Breast epithelium (tissue), 4 donors: ENCODE measurements at regions of chr9 and their contacts with region 1.

Region 1: GRCh38 chr9:24657387-24657786 is 111.7 kb upstream of the IZUMO3 start:
- DNase-seq: no peak
- H3K4me3 ChIP-seq: no peak overlapping the region
- H3K27ac ChIP-seq: no peak overlapping the region
- H3K4me1 ChIP-seq: no peaks in the 10 kb centered on the region
- H3K27me3 ChIP-seq: no peaks in the 10 kb centered on the region
- CTCF ChIP-seq: no peak
- POLR2A ChIP-seq: no peak

Region 2: GRCh38 chr9:24594234-24594850 is 63.0 kb before region 1 on chr9:
- intact Hi-C with region 1: no loop called
- DNase-seq: no peak
- H3K4me3 ChIP-seq: no peak overlapping the region
- H3K27ac ChIP-seq: no peak overlapping the region
- H3K4me1 ChIP-seq: no peaks in the 10 kb centered on the region
- H3K27me3 ChIP-seq: no peaks in the 10 kb centered on the region
- CTCF ChIP-seq: no peak
- POLR2A ChIP-seq: no peak

Region 3: GRCh38 chr9:24708814-24709213 is 51.4 kb after region 1 on chr9:
- intact Hi-C with region 1: loop called (anchors 2 kb)
- DNase-seq: no peak
- H3K4me3 ChIP-seq: no peak overlapping the region
- H3K27ac ChIP-seq: no peak overlapping the region
- H3K4me1 ChIP-seq: no peaks in the 10 kb centered on the region
- H3K27me3 ChIP-seq: no peaks in the 10 kb centered on the region
- CTCF ChIP-seq: no peak
- POLR2A ChIP-seq: no peak